ENCODE measurements at regions of chr2 and their contacts with region 1.

Region 1: GRCh38 chr2:222024932-222025880 is 273.6 kb downstream of the PAX3 start:
- DNase-seq: peak; percentile 8
- H3K4me3 ChIP-seq: no peak overlapping the region; a peak in 1 of 4 replicates
- H3K27ac ChIP-seq: no peak overlapping the region
- H3K4me1 ChIP-seq: no peaks in the 10 kb centered on the region
- H3K27me3 ChIP-seq: no peaks in the 10 kb centered on the region; the same call in 1 of the 2 replicates
- CTCF ChIP-seq: peak; percentile 77
- EP300 ChIP-seq: no peak
- RAD21 ChIP-seq: peak; percentile 64

Region 2: DNA sequence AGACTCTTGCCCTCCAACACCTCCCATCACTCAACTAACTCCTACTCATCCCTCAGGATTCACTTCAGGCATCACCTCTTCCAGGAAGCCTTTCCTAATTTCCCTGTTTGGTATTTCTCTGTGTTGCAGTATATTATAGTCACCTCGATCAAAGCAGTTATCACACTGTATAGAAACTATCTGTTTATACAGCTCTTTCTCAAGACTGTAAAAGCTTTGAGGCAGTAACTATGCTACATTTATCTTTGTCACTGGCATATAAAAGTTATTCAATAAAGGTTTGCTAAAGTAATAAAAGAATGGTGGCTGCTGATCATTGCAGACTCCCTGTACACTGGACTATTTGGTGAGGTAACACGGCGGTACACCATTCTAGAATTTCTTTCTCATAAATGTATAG is 11.3 kb before region 1 on chr2:
- CTCF ChIA-PET with region 1: interaction called, 12 read pairs
- POLR2A ChIA-PET with region 1: no interaction called
- DNase-seq: no peak
- H3K4me3 ChIP-seq: no peak overlapping the region
- H3K27ac ChIP-seq: no peak overlapping the region
- H3K4me1 ChIP-seq: no peaks in the 10 kb centered on the region; a peak in 1 of 4 replicates
- H3K27me3 ChIP-seq: no peaks in the 10 kb centered on the region
- CTCF ChIP-seq: no peak
- EP300 ChIP-seq: no peak
- RAD21 ChIP-seq: no peak

Region 3: GRCh38 chr2:222038067-222038802 is 13.0 kb after region 1 on chr2:
- CTCF ChIA-PET with region 1: interaction called, 26 read pairs
- POLR2A ChIA-PET with region 1: no interaction called
- DNase-seq: no peak
- H3K4me3 ChIP-seq: peak overlapping the region in 1 of 2 experiments; percentile 36; a peak in 1 of 4 replicates
- H3K27ac ChIP-seq: no peak overlapping the region
- H3K4me1 ChIP-seq: no peaks in the 10 kb centered on the region
- H3K27me3 ChIP-seq: peaks cover 6% of the 10 kb centered on the region; the same call in 1 of the 2 replicates
- CTCF ChIP-seq: peak; percentile 55
- EP300 ChIP-seq: no peak
- RAD21 ChIP-seq: peak; percentile 23; the same call in 1 of the 2 replicates

Region 4: GRCh38 chr2:222613715-222614331 is 588.6 kb after region 1 on chr2:
- CTCF ChIA-PET with region 1: interaction called, 12 read pairs
- POLR2A ChIA-PET with region 1: no interaction called
- DNase-seq: peak; percentile 70
- H3K4me3 ChIP-seq: no peak overlapping the region; a peak in 1 of 4 replicates
- H3K27ac ChIP-seq: no peak overlapping the region
- H3K4me1 ChIP-seq: peaks cover 0 to 8% of the 10 kb centered on the region in 2 experiments; a peak in 2 of 4 replicates
- H3K27me3 ChIP-seq: no peaks in the 10 kb centered on the region
- CTCF ChIP-seq: peak; percentile 85
- EP300 ChIP-seq: no peak
- RAD21 ChIP-seq: peak; percentile 91